ENCODE measurements at regions of chr15 and their contacts with region 1.

Region 1: GRCh38 chr15:45587095-45587860 is at the start of gene BLOC1S6:
- DNase-seq: peak; percentile 92
- H3K4me3 Mint-ChIP-seq: peak within 1 kb of the TSS; percentile 99
- H3K27ac Mint-ChIP-seq: peak within 1 kb of the TSS; percentile 100
- H3K4me1 Mint-ChIP-seq: peaks cover 38% of the 10 kb centered on the region
- H3K27me3 Mint-ChIP-seq: no peaks in the 10 kb centered on the region
- total RNA-seq, gene BLOC1S6: 48.5 to 49.4 TPM

Region 2: GRCh38 chr15:45429974-45430792 is 157.1 kb before region 1 on chr15:
- CTCF ChIA-PET with region 1: interaction called, 10 read pairs
- POLR2A ChIA-PET with region 1: no interaction called
- intact Hi-C with region 1: no loop called
- DNase-seq: peak; percentile 87
- H3K4me3 Mint-ChIP-seq: peak overlapping the region; percentile 20
- H3K27ac Mint-ChIP-seq: no peak overlapping the region
- H3K4me1 Mint-ChIP-seq: peaks cover 2% of the 10 kb centered on the region
- H3K27me3 Mint-ChIP-seq: peaks cover 3% of the 10 kb centered on the region

Region 3: GRCh38 chr15:45522328-45523160 is 64.7 kb before region 1 on chr15 and contains the start of gene SLC30A4:
- CTCF ChIA-PET with region 1: interaction called, 4 read pairs
- POLR2A ChIA-PET with region 1: interaction called, 3 read pairs
- intact Hi-C with region 1: loop called (anchors 2 kb)
- DNase-seq: peak; percentile 66
- H3K4me3 Mint-ChIP-seq: peak within 1 kb of the TSS; percentile 82
- H3K27ac Mint-ChIP-seq: peak within 1 kb of the TSS; percentile 14
- H3K4me1 Mint-ChIP-seq: peaks cover 21% of the 10 kb centered on the region
- H3K27me3 Mint-ChIP-seq: no peaks in the 10 kb centered on the region
- total RNA-seq, gene SLC30A4: 1.5 to 2.0 TPM

Region 4: DNA sequence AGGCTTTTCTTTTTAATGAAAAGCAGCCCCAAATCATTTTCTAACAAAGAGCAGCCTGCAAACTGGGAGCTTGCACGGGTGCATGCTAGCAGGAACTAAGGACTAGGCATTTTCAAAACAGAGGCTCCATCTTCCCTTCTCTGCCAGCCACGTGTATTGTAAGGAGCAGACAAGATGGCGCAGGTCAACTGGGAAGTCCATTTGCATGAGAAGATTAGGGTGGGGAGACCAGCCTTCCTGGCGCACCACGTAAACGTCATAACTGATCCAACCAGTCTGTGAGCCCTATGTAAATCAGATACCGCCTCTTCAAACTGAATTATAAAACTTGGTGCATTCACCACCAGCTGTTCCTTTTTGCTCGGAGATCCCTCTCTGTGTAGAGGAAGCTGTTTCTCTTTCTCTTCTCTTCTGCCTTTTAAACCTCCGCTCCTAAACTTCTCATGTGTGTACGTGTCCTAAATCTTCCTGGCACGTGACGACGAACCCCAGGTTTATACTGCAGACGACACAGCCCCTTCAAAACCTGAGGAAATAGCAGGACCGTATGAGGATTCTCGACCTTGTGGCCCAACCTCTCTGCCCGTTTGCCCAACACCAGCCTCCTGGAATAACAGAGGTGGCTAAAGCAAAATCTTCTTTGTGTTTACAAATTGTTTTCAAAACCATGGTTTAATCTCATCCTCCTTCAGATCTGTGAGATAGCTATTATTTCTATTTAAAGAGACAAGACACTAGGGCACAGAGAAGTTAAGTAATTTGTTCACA is 38.3 kb before region 1 on chr15:
- CTCF ChIA-PET with region 1: no interaction called
- POLR2A ChIA-PET with region 1: no interaction called
- intact Hi-C with region 1: no loop called
- DNase-seq: no peak
- H3K4me3 Mint-ChIP-seq: no peak overlapping the region
- H3K27ac Mint-ChIP-seq: no peak overlapping the region
- H3K4me1 Mint-ChIP-seq: no peaks in the 10 kb centered on the region
- H3K27me3 Mint-ChIP-seq: no peaks in the 10 kb centered on the region

Region 5: DNA sequence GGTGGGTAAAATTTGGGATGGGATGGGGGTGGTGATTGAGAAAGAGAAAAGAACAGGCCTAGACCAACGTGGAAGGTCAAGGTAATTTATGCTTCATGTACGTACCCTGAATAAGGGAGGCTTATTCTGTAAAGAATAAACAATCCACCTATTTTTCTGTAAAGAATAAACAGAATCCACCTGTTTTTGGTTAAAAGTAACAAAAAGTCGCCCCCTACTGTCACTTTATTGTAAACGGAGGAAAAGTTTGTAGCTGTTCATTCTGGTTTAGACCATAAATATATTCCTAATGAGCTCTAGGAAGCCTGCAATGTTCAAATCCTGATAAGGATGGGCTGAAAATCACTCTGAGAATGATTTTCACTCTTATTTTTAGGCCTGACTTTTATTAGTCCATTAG is 24.0 kb after region 1 on chr15:
- CTCF ChIA-PET with region 1: interaction called, 38 read pairs
- POLR2A ChIA-PET with region 1: interaction called, 5 read pairs
- intact Hi-C with region 1: loop called (anchors 2 kb)
- DNase-seq: no peak
- H3K4me3 Mint-ChIP-seq: no peak overlapping the region
- H3K27ac Mint-ChIP-seq: no peak overlapping the region
- H3K4me1 Mint-ChIP-seq: peaks cover 11% of the 10 kb centered on the region
- H3K27me3 Mint-ChIP-seq: no peaks in the 10 kb centered on the region

Region 6: GRCh38 chr15:45641999-45642932 is 55.0 kb after region 1 on chr15:
- CTCF ChIA-PET with region 1: interaction called, 7 read pairs
- POLR2A ChIA-PET with region 1: interaction called, 14 read pairs
- intact Hi-C with region 1: no loop called
- DNase-seq: no peak
- H3K4me3 Mint-ChIP-seq: no peak overlapping the region
- H3K27ac Mint-ChIP-seq: peak overlapping the region; percentile 97
- H3K4me1 Mint-ChIP-seq: peaks cover 99% of the 10 kb centered on the region
- H3K27me3 Mint-ChIP-seq: no peaks in the 10 kb centered on the region

Region 7: GRCh38 chr15:45714590-45715488 is 127.6 kb after region 1 on chr15:
- CTCF ChIA-PET with region 1: no interaction called
- POLR2A ChIA-PET with region 1: no interaction called
- intact Hi-C with region 1: no loop called
- DNase-seq: peak; percentile 66
- H3K4me3 Mint-ChIP-seq: no peak overlapping the region
- H3K27ac Mint-ChIP-seq: no peak overlapping the region
- H3K4me1 Mint-ChIP-seq: peaks cover 5% of the 10 kb centered on the region
- H3K27me3 Mint-ChIP-seq: peaks cover 24% of the 10 kb centered on the region

Region 8: GRCh38 chr15:47129033-47129432 is 1541.8 kb after region 1 on chr15:
- CTCF ChIA-PET with region 1: no interaction called
- POLR2A ChIA-PET with region 1: no interaction called
- intact Hi-C with region 1: no loop called
- DNase-seq: no peak
- H3K4me3 Mint-ChIP-seq: no peak overlapping the region
- H3K27ac Mint-ChIP-seq: no peak overlapping the region
- H3K4me1 Mint-ChIP-seq: no peaks in the 10 kb centered on the region
- H3K27me3 Mint-ChIP-seq: no peaks in the 10 kb centered on the region